WTC11 (cell line): ENCODE measurements at regions of chr11 and their contacts with region 1.

Region 1: DNA sequence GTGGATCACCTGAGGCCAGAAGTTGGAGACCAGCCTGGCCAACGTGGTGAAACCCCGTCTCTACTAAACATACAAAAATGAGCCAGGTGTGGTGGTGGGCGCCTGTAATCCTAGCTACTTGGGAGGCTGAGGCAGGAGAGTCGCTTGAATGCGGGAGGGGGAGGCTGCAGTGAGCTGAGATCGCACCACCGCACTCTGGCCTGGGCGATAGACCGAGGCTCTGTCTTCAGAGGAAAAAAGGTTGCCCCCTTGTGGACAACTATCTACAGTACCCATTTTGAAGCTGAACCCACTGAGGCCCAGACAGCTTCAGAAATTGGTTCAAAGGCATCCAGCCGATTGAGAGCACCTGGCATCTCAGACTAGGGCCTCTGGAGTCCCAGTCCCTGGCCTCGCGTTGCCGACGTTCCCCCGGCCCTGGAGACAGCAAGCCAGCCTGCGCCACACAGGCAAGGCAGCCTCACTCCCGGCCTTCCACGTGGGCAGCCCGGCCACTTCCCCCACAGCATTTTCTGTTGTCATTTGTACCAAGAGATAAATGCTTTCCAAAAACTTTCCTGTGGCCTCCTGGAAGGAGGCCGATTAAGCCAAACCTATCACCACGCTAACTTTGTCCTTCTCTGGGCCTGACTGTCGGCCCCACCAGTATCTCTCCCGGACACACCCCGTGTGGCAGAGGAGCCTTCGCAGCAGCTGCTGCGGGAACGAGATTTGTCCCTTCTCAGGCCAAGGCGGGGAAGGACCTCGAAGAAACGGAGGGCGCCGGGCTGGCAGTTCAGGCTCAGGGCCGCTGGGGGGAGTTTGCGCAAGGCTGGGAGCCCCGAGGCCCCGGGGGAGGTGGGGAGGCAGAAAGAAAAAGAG is 82.8 kb downstream of the FLI1 start:
- DNase-seq: peak; percentile 82
- ATAC-seq: peak; percentile 85
- H3K4me3 Mint-ChIP-seq: peak overlapping the region; percentile 35
- H3K27ac Mint-ChIP-seq: no peak overlapping the region
- H3K4me1 Mint-ChIP-seq: peaks cover 41% of the 10 kb centered on the region
- H3K27me3 Mint-ChIP-seq: peaks cover 20% of the 10 kb centered on the region
- CTCF ChIP-seq: peak; percentile 43

Region 2: GRCh38 chr11:128686745-128687177 is 89.9 kb before region 1 on chr11:
- CTCF ChIA-PET with region 1: interaction called, 32 read pairs
- POLR2A ChIA-PET with region 1: no interaction called
- DNase-seq: peak; percentile 60
- ATAC-seq: peak; percentile 20
- H3K4me3 Mint-ChIP-seq: peak overlapping the region; percentile 77
- H3K27ac Mint-ChIP-seq: no peak overlapping the region
- H3K4me1 Mint-ChIP-seq: peaks cover 72% of the 10 kb centered on the region
- H3K27me3 Mint-ChIP-seq: peaks cover 100% of the 10 kb centered on the region
- CTCF ChIP-seq: no peak

Region 3: GRCh38 chr11:128757235-128757711 is 19.4 kb before region 1 on chr11:
- CTCF ChIA-PET with region 1: interaction called, 20 read pairs
- POLR2A ChIA-PET with region 1: no interaction called
- DNase-seq: peak; percentile 36
- ATAC-seq: peak; percentile 76
- H3K4me3 Mint-ChIP-seq: no peak overlapping the region
- H3K27ac Mint-ChIP-seq: no peak overlapping the region
- H3K4me1 Mint-ChIP-seq: peaks cover 26% of the 10 kb centered on the region
- H3K27me3 Mint-ChIP-seq: peaks cover 3% of the 10 kb centered on the region
- CTCF ChIP-seq: no peak

Region 4: GRCh38 chr11:128765571-128766549 is 10.8 kb before region 1 on chr11:
- CTCF ChIA-PET with region 1: interaction called, 20 read pairs
- POLR2A ChIA-PET with region 1: no interaction called
- DNase-seq: no peak
- ATAC-seq: no peak
- H3K4me3 Mint-ChIP-seq: no peak overlapping the region
- H3K27ac Mint-ChIP-seq: no peak overlapping the region
- H3K4me1 Mint-ChIP-seq: peaks cover 9% of the 10 kb centered on the region
- H3K27me3 Mint-ChIP-seq: peaks cover 3% of the 10 kb centered on the region; the same call in 1 of the 2 replicates
- CTCF ChIP-seq: no peak

Region 5: GRCh38 chr11:128802358-128802981 is 25.8 kb after region 1 on chr11:
- CTCF ChIA-PET with region 1: interaction called, 11 read pairs
- POLR2A ChIA-PET with region 1: no interaction called
- DNase-seq: peak; percentile 56
- ATAC-seq: peak; percentile 88
- H3K4me3 Mint-ChIP-seq: no peak overlapping the region
- H3K27ac Mint-ChIP-seq: no peak overlapping the region
- H3K4me1 Mint-ChIP-seq: peaks cover 16% of the 10 kb centered on the region
- H3K27me3 Mint-ChIP-seq: peaks cover 3% of the 10 kb centered on the region; the same call in 1 of the 2 replicates
- CTCF ChIP-seq: peak; percentile 38

Region 6: GRCh38 chr11:128824191-128825049 is 47.8 kb after region 1 on chr11:
- CTCF ChIA-PET with region 1: interaction called, 40 read pairs
- POLR2A ChIA-PET with region 1: interaction called, 3 read pairs
- DNase-seq: peak; percentile 32
- ATAC-seq: peak; percentile 62
- H3K4me3 Mint-ChIP-seq: peak overlapping the region; percentile 54
- H3K27ac Mint-ChIP-seq: no peak overlapping the region
- H3K4me1 Mint-ChIP-seq: peaks cover 43% of the 10 kb centered on the region
- H3K27me3 Mint-ChIP-seq: peaks cover 15% of the 10 kb centered on the region
- CTCF ChIP-seq: no peak

Region 7: DNA sequence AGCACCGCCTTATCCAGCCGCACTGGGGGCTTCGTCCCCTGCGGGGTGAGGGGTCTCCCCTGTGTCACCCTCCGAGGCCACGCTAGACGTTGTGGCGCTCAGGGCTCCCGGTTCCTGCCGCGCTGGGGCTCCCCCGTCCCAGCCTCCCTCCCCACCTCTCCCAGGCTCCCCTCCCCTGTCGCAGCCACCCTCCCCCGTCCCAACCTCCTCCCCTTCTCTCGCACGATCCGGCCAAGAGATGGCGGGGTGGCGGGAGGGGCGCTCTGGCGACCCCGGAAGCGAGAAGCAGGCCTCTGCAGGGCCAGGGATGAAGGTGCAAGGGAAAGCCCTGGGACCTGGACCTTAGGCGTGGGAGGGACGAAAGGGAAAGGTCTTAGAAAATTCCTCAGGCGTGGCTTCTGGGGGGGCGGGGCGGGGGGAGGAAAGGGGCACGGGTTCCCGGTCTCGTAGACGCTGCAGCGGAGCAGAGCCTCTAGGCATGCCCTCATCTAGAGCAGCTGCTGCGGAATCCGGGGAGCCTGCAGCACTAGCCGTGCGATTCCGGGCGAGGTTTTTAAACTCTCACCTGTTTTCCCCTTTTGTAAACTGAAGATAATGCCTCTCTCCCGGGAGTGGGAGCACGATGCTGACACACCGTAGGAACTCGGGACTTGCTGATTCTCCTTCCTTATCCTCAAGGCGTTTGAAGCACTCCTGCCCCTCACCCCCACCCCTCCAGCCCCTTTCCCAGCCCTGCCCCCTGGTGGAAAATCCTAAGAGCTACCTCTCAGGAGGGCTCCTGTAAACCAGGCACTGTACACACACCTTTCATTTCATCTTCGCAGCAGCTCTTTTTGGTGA is 128.9 kb after region 1 on chr11:
- CTCF ChIA-PET with region 1: no interaction called
- POLR2A ChIA-PET with region 1: no interaction called
- DNase-seq: peak; percentile 69
- ATAC-seq: peak; percentile 56
- H3K4me3 Mint-ChIP-seq: peak overlapping the region; percentile 70
- H3K27ac Mint-ChIP-seq: no peak overlapping the region
- H3K4me1 Mint-ChIP-seq: peaks cover 40% of the 10 kb centered on the region
- H3K27me3 Mint-ChIP-seq: peaks cover 86% of the 10 kb centered on the region
- CTCF ChIP-seq: peak; percentile 37; the same call in 1 of the 2 replicates